GM10248 (cell line): ENCODE measurements at regions of chr3 and their contacts with region 1.

Region 1: DNA sequence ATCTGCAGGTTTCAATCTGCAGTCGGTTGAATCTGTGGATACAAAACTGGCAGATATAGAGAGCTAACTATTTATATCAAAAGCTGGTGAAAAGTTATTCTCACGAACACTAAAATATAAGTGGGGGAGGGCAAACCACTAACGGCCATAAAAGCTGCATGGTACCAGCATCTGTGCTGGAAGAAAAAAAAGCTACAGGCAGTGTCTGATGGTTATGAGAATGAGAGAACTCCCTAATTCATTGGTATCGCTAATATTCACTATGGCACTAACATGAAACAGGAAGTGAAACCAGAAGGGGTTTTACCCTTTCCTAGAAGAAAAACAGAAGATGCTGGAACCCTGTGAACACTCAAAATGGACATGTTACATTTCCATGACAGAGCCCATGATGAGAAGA is 15.9 kb downstream of the CEP70 start:
- DNase-seq: no peak
- CTCF ChIP-seq: no peak

Region 2: DNA sequence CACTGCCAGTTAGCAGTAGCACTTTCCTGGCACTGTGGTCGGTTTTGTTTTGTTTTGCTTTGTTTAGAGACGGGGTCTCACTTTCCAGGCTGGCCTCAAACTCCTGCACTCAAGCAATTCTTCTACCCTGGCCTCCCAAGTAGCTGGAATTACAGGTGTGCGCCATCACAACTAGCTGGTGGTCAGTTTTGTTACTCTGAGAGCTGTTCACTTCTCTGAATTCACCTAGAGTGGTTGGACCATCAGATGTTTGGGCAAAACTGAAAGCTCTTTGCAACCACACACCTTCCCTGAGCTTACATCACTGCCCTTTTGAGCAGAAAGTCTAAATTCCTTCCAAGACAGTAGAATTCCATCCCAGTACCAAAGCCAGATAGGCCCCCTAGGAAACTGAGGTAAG is 545.6 kb before region 1 on chr3:
- CTCF ChIA-PET with region 1: no interaction called
- POLR2A ChIA-PET with region 1: no interaction called
- DNase-seq: no peak
- CTCF ChIP-seq: no peak

Region 3: GRCh38 chr3:138567401-138567800 is 10.7 kb before region 1 on chr3:
- CTCF ChIA-PET with region 1: interaction called, 10 read pairs
- POLR2A ChIA-PET with region 1: no interaction called
- DNase-seq: no peak
- CTCF ChIP-seq: no peak